ENCODE measurements at regions of chr6 and their contacts with region 1.

Region 1: GRCh38 chr6:90393232-90393884 is 96.7 kb upstream of the BACH2 start:
- DNase-seq: peak; percentile 65
- H3K4me3 Mint-ChIP-seq: no peak overlapping the region
- H3K27ac Mint-ChIP-seq: peak overlapping the region; percentile 32
- H3K4me1 Mint-ChIP-seq: peaks cover 68% of the 10 kb centered on the region
- H3K27me3 Mint-ChIP-seq: no peaks in the 10 kb centered on the region

Region 2: GRCh38 chr6:89940225-89941027 is 452.9 kb before region 1 on chr6:
- intact Hi-C with region 1: loop called (anchors 1 kb)
- DNase-seq: peak; percentile 57
- H3K4me3 Mint-ChIP-seq: no peak overlapping the region
- H3K27ac Mint-ChIP-seq: no peak overlapping the region
- H3K4me1 Mint-ChIP-seq: peaks cover 25% of the 10 kb centered on the region
- H3K27me3 Mint-ChIP-seq: no peaks in the 10 kb centered on the region

Region 3: DNA sequence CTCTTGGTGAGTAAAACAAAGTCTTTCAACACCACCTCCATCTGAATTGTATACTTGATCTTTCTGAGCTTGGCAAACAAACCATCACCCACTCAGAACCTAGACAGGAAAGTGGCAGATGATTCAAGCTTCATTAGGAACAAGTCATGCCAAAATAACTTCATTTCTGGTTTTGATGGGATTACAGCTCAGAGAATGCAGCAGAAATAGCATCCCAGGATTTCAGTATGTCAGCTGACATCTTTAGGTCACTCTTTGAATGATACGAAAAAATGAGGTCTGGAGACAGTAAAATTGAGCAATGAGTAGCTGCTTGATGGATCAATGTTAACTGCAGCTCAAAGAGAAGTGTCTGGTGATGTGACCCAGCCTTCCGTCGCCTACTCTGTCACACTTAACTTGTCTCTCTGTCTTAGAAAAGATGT is 406.7 kb before region 1 on chr6:
- intact Hi-C with region 1: no loop called
- DNase-seq: no peak
- H3K4me3 Mint-ChIP-seq: peak overlapping the region; percentile 17
- H3K27ac Mint-ChIP-seq: peak overlapping the region; percentile 89
- H3K4me1 Mint-ChIP-seq: peaks cover 75% of the 10 kb centered on the region
- H3K27me3 Mint-ChIP-seq: peaks cover 1% of the 10 kb centered on the region

Region 4: DNA sequence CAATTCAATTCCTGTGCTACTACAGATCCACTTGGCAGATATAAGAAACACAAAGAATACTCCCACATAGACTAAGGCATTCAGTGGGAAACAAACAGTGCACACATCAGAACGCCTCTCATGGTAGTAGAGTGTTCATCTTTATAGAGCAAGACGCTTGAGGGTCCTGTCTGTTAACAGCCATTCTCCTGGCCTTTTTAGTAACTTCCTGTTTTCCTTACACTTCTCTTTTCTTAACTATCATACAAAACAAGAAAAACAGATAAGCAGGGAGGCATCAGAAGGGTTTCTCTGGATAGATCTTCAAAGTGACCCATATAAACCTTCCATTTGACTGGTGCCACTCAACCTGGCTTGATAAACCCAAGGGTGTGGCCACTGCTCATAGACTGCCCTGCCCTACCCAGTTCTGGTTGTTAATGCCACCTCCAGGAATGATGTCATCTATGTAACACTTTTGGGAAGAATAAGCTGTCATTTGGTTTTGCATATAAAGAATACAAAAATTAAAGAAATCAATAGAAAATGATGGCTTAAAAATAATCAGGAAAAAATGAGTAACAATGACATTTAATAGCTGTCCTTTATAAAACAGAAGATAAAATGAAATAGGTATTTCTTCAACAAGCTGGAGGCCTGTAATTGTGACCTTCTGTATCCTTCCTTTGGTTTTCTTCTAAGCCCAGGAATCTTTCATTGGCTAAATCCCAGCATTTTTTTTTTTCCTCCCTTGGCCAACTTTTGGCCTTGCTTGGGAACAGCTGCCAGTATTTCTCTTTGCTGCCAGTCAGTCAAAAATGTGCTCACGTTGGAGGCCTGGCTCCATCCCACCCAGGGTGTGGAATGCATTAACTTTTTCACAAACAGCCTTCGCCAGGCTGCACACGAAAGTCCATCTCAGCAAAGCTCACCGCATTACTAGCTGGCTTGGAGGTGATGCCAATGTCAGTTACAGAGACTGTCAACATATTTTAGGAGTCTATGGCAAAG is 395.6 kb before region 1 on chr6:
- intact Hi-C with region 1: no loop called
- DNase-seq: no peak
- H3K4me3 Mint-ChIP-seq: no peak overlapping the region
- H3K27ac Mint-ChIP-seq: no peak overlapping the region
- H3K4me1 Mint-ChIP-seq: peaks cover 15% of the 10 kb centered on the region
- H3K27me3 Mint-ChIP-seq: no peaks in the 10 kb centered on the region

Region 5: GRCh38 chr6:90251295-90251992 is 141.9 kb before region 1 on chr6:
- intact Hi-C with region 1: loop called (anchors 1 kb)
- DNase-seq: no peak
- H3K4me3 Mint-ChIP-seq: peak overlapping the region; percentile 34
- H3K27ac Mint-ChIP-seq: peak overlapping the region; percentile 90
- H3K4me1 Mint-ChIP-seq: peaks cover 84% of the 10 kb centered on the region
- H3K27me3 Mint-ChIP-seq: peaks cover 2% of the 10 kb centered on the region

Region 6: DNA sequence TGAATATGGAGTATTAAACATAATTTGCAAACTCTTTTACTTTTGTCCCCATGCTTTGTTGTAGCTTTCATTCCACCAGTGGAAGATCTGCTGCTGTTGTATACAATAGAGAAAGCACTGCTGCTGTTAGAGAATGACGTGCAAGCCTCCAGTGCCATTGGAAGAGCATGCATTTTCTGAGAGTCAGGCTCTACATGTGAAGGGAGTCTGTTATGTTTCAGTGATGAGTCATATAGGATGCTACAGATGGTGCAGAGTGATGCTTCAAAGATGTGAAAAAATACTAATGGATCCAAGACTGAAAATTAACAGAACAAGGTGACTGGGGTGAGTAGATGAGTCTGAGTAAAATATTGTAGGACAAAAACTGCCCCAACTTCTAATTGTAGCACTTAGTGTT is 74.3 kb before region 1 on chr6:
- intact Hi-C with region 1: loop called (anchors 2 kb)
- DNase-seq: no peak
- H3K4me3 Mint-ChIP-seq: no peak overlapping the region
- H3K27ac Mint-ChIP-seq: peak overlapping the region; percentile 63
- H3K4me1 Mint-ChIP-seq: peaks cover 19% of the 10 kb centered on the region
- H3K27me3 Mint-ChIP-seq: peaks cover 4% of the 10 kb centered on the region

Region 7: DNA sequence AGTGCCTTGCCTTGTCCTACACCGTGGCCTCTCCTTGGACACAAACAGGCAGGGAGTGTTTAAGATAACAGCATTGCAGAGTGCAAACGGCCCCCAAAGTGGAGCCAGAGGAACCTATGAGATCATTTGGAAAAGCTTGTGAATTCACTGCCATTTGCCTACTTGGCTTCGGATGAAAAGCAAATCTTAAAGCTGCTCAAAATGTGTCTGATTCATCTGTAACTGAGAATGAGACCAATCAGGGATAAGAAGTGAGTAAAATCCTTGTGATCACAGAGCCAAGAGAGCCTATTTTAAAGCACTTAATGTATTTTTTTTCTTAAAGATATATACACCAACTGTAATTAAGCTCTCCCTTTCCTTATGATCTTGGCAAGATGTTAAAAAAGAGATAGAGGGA is 31.0 kb before region 1 on chr6:
- intact Hi-C with region 1: no loop called
- DNase-seq: no peak
- H3K4me3 Mint-ChIP-seq: no peak overlapping the region
- H3K27ac Mint-ChIP-seq: no peak overlapping the region
- H3K4me1 Mint-ChIP-seq: no peaks in the 10 kb centered on the region
- H3K27me3 Mint-ChIP-seq: peaks cover 2% of the 10 kb centered on the region

Region 8: DNA sequence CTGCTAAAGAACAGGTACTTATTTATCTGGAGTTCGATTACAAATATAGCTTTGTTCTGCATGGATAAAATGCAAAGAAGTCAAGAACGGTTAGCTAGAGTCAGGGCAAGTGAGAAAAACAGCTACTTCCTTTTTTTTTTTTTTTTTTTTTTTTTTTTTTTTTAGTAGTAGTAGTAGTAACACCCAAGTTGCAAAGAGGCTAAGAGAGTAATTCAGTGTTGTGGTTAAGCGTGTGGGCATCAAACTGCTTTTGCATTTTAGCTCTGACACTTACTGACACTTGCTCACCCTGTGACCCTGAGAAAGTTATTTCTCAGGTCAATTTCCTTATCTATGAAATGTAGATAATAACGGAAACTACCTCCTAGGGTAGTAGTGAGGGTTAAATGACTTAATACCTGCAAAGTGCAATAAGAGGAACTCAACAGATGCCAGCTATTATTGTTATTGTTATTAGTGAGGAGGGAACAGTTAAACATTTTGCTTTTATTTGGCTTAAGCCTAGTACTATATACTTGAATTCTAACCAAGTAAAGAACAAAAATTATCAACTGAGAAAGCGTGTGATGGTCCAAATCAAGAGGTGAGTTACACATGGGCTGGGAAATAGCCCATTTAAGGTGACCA is 10.0 kb before region 1 on chr6:
- intact Hi-C with region 1: loop called (anchors 1 kb)
- DNase-seq: no peak
- H3K4me3 Mint-ChIP-seq: no peak overlapping the region
- H3K27ac Mint-ChIP-seq: peak overlapping the region; percentile 1
- H3K4me1 Mint-ChIP-seq: peaks cover 38% of the 10 kb centered on the region
- H3K27me3 Mint-ChIP-seq: peaks cover 11% of the 10 kb centered on the region

Region 9: DNA sequence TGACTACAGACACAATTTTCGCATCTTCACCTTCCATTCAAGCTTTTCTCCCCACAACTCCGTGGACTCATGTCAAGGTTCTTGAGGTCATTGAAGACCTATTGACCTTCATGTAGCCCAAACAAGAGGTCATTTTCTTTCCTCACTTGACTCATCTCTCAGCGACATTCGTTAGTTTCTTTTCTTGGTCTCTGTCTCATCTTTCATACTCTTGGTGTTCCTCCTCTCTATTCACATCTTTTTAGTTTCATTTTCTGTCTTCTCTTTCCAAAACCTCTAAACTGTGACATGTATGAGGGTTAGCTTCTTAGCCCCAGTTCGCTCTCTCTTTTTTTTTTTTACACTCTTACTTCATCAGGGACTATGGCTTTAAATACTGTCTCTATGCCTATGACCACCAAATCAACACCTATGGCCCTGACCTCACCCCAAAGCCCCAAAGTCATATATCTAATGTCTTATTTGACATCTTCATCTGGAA is 31.8 kb after region 1 on chr6:
- intact Hi-C with region 1: loop called (anchors 1 kb)
- DNase-seq: no peak
- H3K4me3 Mint-ChIP-seq: peak overlapping the region; percentile 68
- H3K27ac Mint-ChIP-seq: peak overlapping the region; percentile 87
- H3K4me1 Mint-ChIP-seq: peaks cover 26% of the 10 kb centered on the region
- H3K27me3 Mint-ChIP-seq: no peaks in the 10 kb centered on the region

Region 10: DNA sequence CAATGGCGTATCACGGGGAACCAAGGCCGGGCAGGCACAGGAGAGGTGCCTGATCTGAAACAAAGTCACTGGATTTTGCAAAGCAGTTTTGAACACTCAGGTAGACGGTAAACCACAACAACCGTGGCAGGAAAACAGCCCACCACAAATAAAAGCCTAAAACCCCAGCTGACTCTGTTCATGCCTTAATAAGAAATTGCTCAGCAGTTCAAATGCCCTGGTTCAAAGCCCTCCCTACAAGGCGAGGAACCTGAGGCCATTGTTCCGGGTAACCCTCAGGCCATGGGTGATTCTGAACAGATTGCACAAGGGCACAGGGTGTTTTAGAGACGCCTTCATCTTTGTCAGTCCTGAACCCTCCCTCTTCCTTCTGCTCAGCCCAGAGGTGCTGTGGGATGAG is 79.4 kb after region 1 on chr6:
- intact Hi-C with region 1: loop called (anchors 1 kb)
- DNase-seq: peak; percentile 52
- H3K4me3 Mint-ChIP-seq: peak overlapping the region; percentile 68
- H3K27ac Mint-ChIP-seq: peak overlapping the region; percentile 92
- H3K4me1 Mint-ChIP-seq: peaks cover 100% of the 10 kb centered on the region
- H3K27me3 Mint-ChIP-seq: no peaks in the 10 kb centered on the region

Measured in activated T-helper 1 cell treated with anti-CD3 and anti-CD28 coated beads, Interleukin-12 subunit alpha, Interleukin-12 subunit beta, Interleukin-2, Interleukin-4 antibody, amounts not matched to agents 30 ng/mL and 10 ng/mL and 1 ng/mL, durations not matched to agents 14 hours and 24 hours and 36 hours (primary cell).